HCT116 (cell line): ENCODE measurements at regions of chr11 and their contacts with region 1.

Region 1: DNA sequence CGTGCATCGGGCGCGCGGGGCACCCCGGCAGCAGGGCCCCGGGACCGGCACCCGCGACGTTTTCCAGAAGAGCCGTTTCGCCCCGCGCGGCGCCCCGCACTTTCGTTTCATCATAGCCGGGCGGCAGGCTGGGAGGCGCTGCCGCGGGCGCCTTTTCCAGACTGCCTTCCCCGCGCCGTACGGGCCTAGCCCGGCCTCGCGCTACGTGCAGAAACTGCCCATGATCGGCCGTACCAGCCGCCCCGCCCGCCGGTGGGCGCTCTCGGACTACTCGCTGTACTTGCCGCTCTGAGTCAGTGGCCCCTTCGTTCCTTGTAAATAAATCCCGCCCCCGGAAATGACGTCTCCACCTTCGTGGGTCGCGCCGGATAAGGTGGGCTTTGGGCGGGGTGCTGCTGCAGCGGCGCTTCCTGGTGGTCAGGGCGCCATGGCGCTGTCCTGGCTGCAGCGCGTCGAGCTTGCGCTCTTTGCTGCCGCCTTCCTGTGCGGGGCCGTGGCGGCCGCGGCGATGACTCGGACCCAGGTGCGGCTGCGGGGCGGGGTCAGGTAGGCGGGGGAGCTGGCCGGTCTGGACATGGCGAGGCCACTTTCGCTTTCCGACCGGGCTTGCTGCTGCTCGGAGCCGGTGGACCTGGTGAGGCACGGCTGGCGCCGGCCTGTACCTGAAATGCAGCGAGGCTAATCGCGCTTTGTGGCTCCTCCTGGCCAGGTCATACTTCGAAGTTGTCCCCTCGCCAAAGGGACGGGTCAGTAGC is at the start of gene TMEM179B:
- DNase-seq: peak; percentile 98
- ATAC-seq: peak; percentile 71
- H3K4me3 ChIP-seq: peak within 1 kb of the TSS; percentile 62 to 80
- H3K27ac ChIP-seq: peak within 1 kb of the TSS; percentile 96
- H3K4me1 ChIP-seq: peaks cover 18 to 41% of the 10 kb centered on the region in 2 experiments; a peak in 3 of 4 replicates
- H3K27me3 ChIP-seq: no peaks in the 10 kb centered on the region
- CTCF ChIP-seq: peak in 2 of 3 experiments; percentile 41 to 73; a peak in 4 of 6 replicates
- POLR2A ChIP-seq: peak; percentile 90
- RAD21 ChIP-seq: no peak
- total RNA-seq, gene TMEM179B: 51.6 TPM

Region 2: GRCh38 chr11:62671575-62672389 is 115.4 kb before region 1 on chr11 and contains the starts of genes LBHD1 and UQCC3:
- CTCF ChIA-PET with region 1: interaction called, 4 read pairs
- POLR2A ChIA-PET with region 1: no interaction called
- RAD21 ChIA-PET with region 1: no interaction called
- intact Hi-C with region 1: loop called (anchors 5 kb)
- DNase-seq: peak; percentile 79
- ATAC-seq: peak; percentile 62
- H3K4me3 ChIP-seq: peak within 1 kb of the TSS; percentile 96 to 97
- H3K27ac ChIP-seq: peak within 1 kb of the TSS; percentile 98
- H3K4me1 ChIP-seq: peaks cover 35 to 59% of the 10 kb centered on the region in 2 experiments
- H3K27me3 ChIP-seq: no peaks in the 10 kb centered on the region
- CTCF ChIP-seq: no peak
- POLR2A ChIP-seq: peak; percentile 63
- RAD21 ChIP-seq: no peak
- total RNA-seq, gene LBHD1: 14.7 TPM
- total RNA-seq, gene UQCC3: 17.9 TPM

Region 3: DNA sequence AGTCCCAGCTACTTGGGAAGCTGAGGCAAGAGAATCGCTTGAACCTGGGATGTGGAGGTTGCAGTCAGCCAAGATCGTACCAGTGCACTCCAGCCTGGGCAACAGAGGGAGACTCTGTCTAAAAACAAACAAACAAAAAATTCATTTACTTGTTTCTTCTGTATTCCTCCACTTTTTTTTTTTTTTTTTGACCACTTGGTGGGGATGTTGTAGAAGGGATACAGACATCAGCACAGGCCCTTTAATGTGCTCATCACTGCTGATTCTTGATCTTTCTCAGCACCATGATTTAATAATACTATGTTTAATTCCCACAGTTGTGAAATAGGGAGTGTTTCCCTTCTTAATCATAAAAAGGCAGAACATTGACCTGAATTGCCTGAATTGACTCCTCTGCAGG is 54.4 kb before region 1 on chr11:
- CTCF ChIA-PET with region 1: interaction called, 7 read pairs
- POLR2A ChIA-PET with region 1: interaction called, 3 read pairs
- RAD21 ChIA-PET with region 1: no interaction called
- intact Hi-C with region 1: loop called (anchors 2 kb)
- DNase-seq: no peak
- ATAC-seq: no peak
- H3K4me3 ChIP-seq: no peak overlapping the region
- H3K27ac ChIP-seq: no peak overlapping the region
- H3K4me1 ChIP-seq: peaks cover 6 to 10% of the 10 kb centered on the region in 2 experiments; a peak in 3 of 4 replicates
- H3K27me3 ChIP-seq: no peaks in the 10 kb centered on the region
- CTCF ChIP-seq: peak; percentile 21 to 59 (median 33); a peak in 4 of 6 replicates
- POLR2A ChIP-seq: no peak
- RAD21 ChIP-seq: peak; percentile 65

Region 4: GRCh38 chr11:62753736-62754603 is 33.2 kb before region 1 on chr11 and contains the start of gene ZBTB3:
- CTCF ChIA-PET with region 1: interaction called, 24 read pairs
- POLR2A ChIA-PET with region 1: interaction called, 9 read pairs
- RAD21 ChIA-PET with region 1: interaction called in 1 of 2 experiments, 3 read pairs
- intact Hi-C with region 1: no loop called
- DNase-seq: peak; percentile 99
- ATAC-seq: peak; percentile 96
- H3K4me3 ChIP-seq: peak within 1 kb of the TSS; percentile 70 to 84
- H3K27ac ChIP-seq: peak within 1 kb of the TSS; percentile 76
- H3K4me1 ChIP-seq: peaks cover 4 to 18% of the 10 kb centered on the region in 2 experiments; a peak in 3 of 4 replicates
- H3K27me3 ChIP-seq: no peaks in the 10 kb centered on the region
- CTCF ChIP-seq: no peak
- POLR2A ChIP-seq: peak; percentile 86
- RAD21 ChIP-seq: no peak
- total RNA-seq, gene ZBTB3: 11.3 TPM

Region 5: GRCh38 chr11:62771144-62772021 is 15.8 kb before region 1 on chr11 and contains the start of gene TAF6L:
- CTCF ChIA-PET with region 1: interaction called, 27 read pairs
- POLR2A ChIA-PET with region 1: interaction called, 9 read pairs
- RAD21 ChIA-PET with region 1: no interaction called
- intact Hi-C with region 1: no loop called
- DNase-seq: peak; percentile 93
- ATAC-seq: peak; percentile 94
- H3K4me3 ChIP-seq: peak within 1 kb of the TSS; percentile 67 to 69
- H3K27ac ChIP-seq: peak within 1 kb of the TSS; percentile 74
- H3K4me1 ChIP-seq: peaks cover 7 to 24% of the 10 kb centered on the region in 2 experiments; a peak in 3 of 4 replicates
- H3K27me3 ChIP-seq: no peaks in the 10 kb centered on the region
- CTCF ChIP-seq: no peak
- POLR2A ChIP-seq: peak; percentile 7
- RAD21 ChIP-seq: no peak
- total RNA-seq, gene TAF6L: 24.2 TPM

Region 6: DNA sequence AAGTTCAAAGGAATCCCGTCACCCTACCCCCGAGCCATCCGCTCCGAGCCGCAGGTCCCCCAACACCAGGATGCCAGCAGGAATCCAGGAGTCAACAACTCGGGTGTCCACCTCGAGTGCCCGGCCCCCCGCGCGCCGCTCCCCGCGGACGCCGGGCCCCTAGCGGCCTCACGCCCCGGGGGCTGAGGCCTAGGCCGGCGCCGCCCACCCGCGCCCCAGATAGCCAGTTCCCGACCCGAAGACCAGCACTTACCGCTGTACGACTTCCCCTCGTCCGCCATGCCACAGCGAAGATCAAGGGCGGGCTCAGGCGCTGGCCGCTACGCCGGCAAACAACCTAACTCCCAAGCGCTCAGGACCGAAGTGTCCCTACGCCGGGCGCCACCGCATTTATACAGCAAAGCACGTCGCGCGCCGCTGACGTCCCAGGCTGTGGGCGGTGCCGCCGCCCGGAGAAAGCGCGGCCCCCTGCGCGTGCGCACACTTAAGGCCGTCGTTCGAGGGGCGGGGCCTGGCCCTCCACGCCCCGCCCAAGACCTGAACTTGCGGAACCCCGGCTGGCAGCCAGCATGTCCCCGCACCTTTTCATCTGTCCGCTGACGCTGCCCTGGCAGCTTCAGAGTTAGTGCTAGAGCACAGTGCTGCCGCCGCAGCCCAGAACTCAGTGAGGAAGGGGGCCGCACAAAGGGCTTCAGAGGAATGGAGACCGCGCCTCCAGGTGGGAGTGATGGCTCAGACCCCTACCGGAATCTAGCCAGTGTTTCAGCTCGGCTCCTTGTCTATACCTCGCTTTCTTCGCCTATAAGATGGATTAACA is 18.1 kb after region 1 on chr11 and contains the start of gene NXF1:
- CTCF ChIA-PET with region 1: interaction called, 5 read pairs
- POLR2A ChIA-PET with region 1: interaction called, 11 read pairs
- RAD21 ChIA-PET with region 1: no interaction called
- intact Hi-C with region 1: no loop called
- DNase-seq: peak; percentile 90
- ATAC-seq: peak; percentile 91
- H3K4me3 ChIP-seq: peak within 1 kb of the TSS; percentile 68 to 79
- H3K27ac ChIP-seq: peak within 1 kb of the TSS; percentile 85
- H3K4me1 ChIP-seq: peaks cover 0 to 21% of the 10 kb centered on the region in 2 experiments; a peak in 3 of 4 replicates
- H3K27me3 ChIP-seq: no peaks in the 10 kb centered on the region
- CTCF ChIP-seq: no peak
- POLR2A ChIP-seq: peak; percentile 99
- RAD21 ChIP-seq: no peak
- total RNA-seq, gene NXF1: 55.5 TPM

Region 7: GRCh38 chr11:62880803-62881578 is 93.8 kb after region 1 on chr11 and contains the start of gene SLC3A2:
- CTCF ChIA-PET with region 1: interaction called, 7 read pairs
- POLR2A ChIA-PET with region 1: interaction called, 3 read pairs
- RAD21 ChIA-PET with region 1: no interaction called
- intact Hi-C with region 1: loop called (anchors 5 kb)
- DNase-seq: peak; percentile 68
- ATAC-seq: peak; percentile 87
- H3K4me3 ChIP-seq: peak within 1 kb of the TSS; percentile 75 to 85
- H3K27ac ChIP-seq: peak within 1 kb of the TSS; percentile 96
- H3K4me1 ChIP-seq: peaks cover 38 to 74% of the 10 kb centered on the region in 2 experiments
- H3K27me3 ChIP-seq: no peaks in the 10 kb centered on the region
- CTCF ChIP-seq: peak in 2 of 3 experiments; percentile 47 to 52; a peak in 4 of 6 replicates
- POLR2A ChIP-seq: peak; percentile 98
- RAD21 ChIP-seq: no peak
- total RNA-seq, gene SLC3A2: 418 TPM

Region 8: GRCh38 chr11:62965574-62965973 is 178.4 kb after region 1 on chr11:
- CTCF ChIA-PET with region 1: no interaction called
- POLR2A ChIA-PET with region 1: no interaction called
- RAD21 ChIA-PET with region 1: no interaction called
- intact Hi-C with region 1: no loop called
- DNase-seq: no peak
- ATAC-seq: no peak
- H3K4me3 ChIP-seq: no peak overlapping the region
- H3K27ac ChIP-seq: no peak overlapping the region
- H3K4me1 ChIP-seq: no peaks in the 10 kb centered on the region
- H3K27me3 ChIP-seq: no peaks in the 10 kb centered on the region
- CTCF ChIP-seq: no peak
- POLR2A ChIP-seq: no peak
- RAD21 ChIP-seq: no peak